Spleen (tissue), 13 donors: ENCODE measurements at regions of chr1 and their contacts with region 1.

Region 1: GRCh38 chr1:149949911-149950310 is 13.2 kb upstream of the MTMR11 start:
- DNase-seq: no peak
- H3K4me3 ChIP-seq: no peak overlapping the region
- H3K27ac ChIP-seq: no peak overlapping the region
- H3K4me1 ChIP-seq: no peaks in the 10 kb centered on the region
- H3K27me3 ChIP-seq: no peaks in the 10 kb centered on the region
- CTCF ChIP-seq: no peak
- POLR2A ChIP-seq: no peak

Region 2: GRCh38 chr1:150067184-150068036 is 117.5 kb after region 1 on chr1 and contains the start of gene VPS45:
- intact Hi-C with region 1: no loop called
- DNase-seq: peak; percentile 95
- H3K4me3 ChIP-seq: peak within 1 kb of the TSS; percentile 64 to 85 (median 70)
- H3K27ac ChIP-seq: peak within 1 kb of the TSS; percentile 88 to 95 (median 92)
- H3K4me1 ChIP-seq: peaks cover 3 to 55% (median 34%) of the 10 kb centered on the region in 6 donors
- H3K27me3 ChIP-seq: no peaks in the 10 kb centered on the region
- CTCF ChIP-seq: peak in 6 of 11 experiments; percentile 5 to 45 (median 14)
- POLR2A ChIP-seq: peak in 2 of 3 donors; percentile 21 to 63
- total RNA-seq, gene VPS45: 35.8 to 62.8 (median 47.4) TPM

Region 3: DNA sequence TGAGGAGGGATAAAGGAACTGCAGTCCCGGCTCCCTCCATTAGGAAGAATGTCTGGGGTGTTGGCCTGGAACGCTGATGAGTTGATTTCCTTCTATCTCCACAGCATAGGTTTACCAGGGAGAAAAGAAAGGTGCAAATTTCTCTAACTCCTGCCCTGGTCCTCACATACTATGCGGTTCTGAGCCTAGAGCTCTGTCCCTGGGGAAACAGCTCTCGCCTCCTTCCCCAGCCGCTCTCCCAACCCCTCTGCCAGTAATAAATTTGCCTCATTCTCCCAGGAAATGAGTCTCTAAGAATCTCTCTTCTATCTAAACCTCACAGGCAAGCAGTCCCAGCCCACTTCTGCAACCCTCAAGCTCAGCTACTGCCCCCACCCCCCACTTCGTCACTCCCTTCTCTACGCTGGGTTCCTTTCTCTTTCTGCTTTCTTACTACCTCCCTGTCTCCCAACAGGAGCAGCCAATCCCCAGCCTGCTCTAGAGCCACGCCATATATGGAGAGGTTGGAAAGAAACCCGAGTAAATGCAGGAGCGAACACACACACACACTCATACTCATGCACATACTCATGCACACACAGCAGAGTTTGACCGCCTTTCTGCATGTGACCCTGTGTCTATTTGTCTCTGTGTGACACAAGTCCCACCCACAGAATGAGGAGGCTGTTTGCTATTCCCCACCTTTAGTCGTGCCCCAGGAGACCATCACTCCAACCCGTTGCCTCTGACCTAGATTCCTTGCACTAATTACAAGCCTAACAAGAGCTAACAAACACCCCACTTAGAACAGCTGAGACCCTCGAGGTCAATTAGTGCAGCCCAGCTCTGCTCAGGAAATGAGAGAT is 213.2 kb after region 1 on chr1:
- intact Hi-C with region 1: no loop called
- DNase-seq: peak; percentile 85
- H3K4me3 ChIP-seq: peak overlapping the region in 2 of 8 donors; percentile 11 to 61
- H3K27ac ChIP-seq: peak overlapping the region; percentile 80 to 95 (median 88)
- H3K4me1 ChIP-seq: peaks cover 65 to 88% (median 81%) of the 10 kb centered on the region in 6 donors
- H3K27me3 ChIP-seq: no peaks in the 10 kb centered on the region
- CTCF ChIP-seq: no peak
- POLR2A ChIP-seq: peak in 1 of 3 donors; percentile 29

Region 4: DNA sequence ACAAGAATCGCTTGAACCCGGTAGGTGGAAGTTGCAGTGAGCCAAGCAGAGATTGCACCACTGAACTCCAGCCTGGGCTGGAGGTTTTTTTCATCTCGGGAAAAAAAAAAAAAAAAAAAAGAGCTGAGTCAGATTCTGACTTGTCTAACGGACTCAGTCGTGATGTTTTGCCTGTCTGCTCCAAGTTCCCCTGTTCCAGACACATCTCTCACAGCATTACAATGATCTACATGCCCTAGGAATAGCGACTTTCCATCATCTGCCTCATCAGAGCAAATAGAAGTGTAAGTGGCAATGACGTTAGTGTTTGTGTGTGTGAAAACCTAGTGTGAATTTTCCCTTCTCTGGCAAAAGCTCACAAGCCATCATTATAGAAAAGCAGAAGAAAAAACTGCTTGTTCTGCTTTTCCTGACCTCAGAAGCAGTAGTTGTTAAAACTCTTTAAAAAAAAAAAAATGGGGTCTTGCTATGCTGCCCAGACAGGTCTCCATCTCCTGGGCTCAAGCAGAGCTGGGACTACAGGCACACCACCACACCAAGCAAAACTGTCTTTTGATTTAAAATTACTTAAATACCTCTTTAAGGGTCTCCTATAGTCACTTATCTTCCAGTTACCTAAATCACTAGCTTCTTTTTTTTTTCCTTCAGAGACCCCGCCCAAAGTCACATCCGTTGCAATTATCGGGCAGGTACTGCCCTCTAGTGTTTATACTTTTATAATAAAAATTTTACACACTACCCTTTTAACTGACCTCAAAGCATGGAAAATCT is 237.1 kb after region 1 on chr1:
- intact Hi-C with region 1: loop called (anchors 10 kb)
- DNase-seq: no peak
- H3K4me3 ChIP-seq: peak overlapping the region in 2 of 8 donors; percentile 3 to 39
- H3K27ac ChIP-seq: peak overlapping the region in 7 of 8 donors; percentile 61 to 85 (median 72)
- H3K4me1 ChIP-seq: peaks cover 0 to 46% (median 18%) of the 10 kb centered on the region in 6 donors
- H3K27me3 ChIP-seq: no peaks in the 10 kb centered on the region
- CTCF ChIP-seq: peak in 9 of 11 experiments; percentile 24 to 59 (median 54)
- POLR2A ChIP-seq: no peak